ENCODE measurements at regions of chr21 and their contacts with region 1.

Region 1: GRCh38 chr21:17819114-17819876 is at the start of gene C21orf91:
- DNase-seq: peak; percentile 87
- H3K4me3 Mint-ChIP-seq: peak within 1 kb of the TSS; percentile 88
- H3K27ac Mint-ChIP-seq: peak within 1 kb of the TSS; percentile 100
- H3K4me1 Mint-ChIP-seq: peaks cover 43% of the 10 kb centered on the region
- H3K27me3 Mint-ChIP-seq: no peaks in the 10 kb centered on the region
- total RNA-seq, gene C21orf91: 45.4 and 49.2 TPM in 2 replicates

Region 2: DNA sequence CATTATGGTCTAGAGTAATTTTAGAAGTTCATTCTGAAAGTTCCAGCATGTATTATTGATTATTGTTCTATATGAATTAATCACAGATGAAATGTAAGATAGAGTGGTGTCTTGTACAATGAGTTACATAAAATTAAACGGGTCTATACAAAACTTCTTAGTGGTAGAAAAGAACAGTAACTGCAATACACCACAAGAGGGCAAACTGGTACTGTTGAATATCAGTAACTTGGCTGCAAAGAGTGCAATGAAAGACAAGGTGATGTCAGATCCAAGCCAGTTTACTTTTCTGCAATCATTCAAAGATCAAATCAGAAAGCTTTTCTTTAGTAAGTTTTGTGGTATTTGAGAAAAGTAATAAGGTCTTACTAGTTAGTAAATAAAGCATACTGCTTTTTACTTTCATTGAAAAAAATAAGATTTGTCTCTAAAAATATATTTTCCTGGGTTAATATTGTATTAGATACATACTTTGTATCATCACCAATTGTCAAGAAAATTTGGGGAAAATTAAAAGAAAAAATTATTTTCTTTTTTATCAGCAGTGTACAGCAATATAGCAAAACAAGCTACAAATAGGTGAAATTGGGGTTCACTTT is 140.2 kb before region 1 on chr21:
- intact Hi-C with region 1: loop called (anchors 1 kb)
- DNase-seq: peak; percentile 24
- H3K4me3 Mint-ChIP-seq: no peak overlapping the region
- H3K27ac Mint-ChIP-seq: no peak overlapping the region
- H3K4me1 Mint-ChIP-seq: no peaks in the 10 kb centered on the region
- H3K27me3 Mint-ChIP-seq: peaks cover 2% of the 10 kb centered on the region

Region 3: GRCh38 chr21:17780539-17780938 is 38.8 kb before region 1 on chr21:
- intact Hi-C with region 1: loop called (anchors 1 kb)
- DNase-seq: peak; percentile 39
- H3K4me3 Mint-ChIP-seq: peak overlapping the region; percentile 53
- H3K27ac Mint-ChIP-seq: peak overlapping the region; percentile 82
- H3K4me1 Mint-ChIP-seq: peaks cover 90% of the 10 kb centered on the region
- H3K27me3 Mint-ChIP-seq: no peaks in the 10 kb centered on the region

Region 4: GRCh38 chr21:17805966-17806365 is 13.3 kb before region 1 on chr21:
- intact Hi-C with region 1: loop called (anchors 1 kb)
- DNase-seq: no peak
- H3K4me3 Mint-ChIP-seq: no peak overlapping the region
- H3K27ac Mint-ChIP-seq: no peak overlapping the region
- H3K4me1 Mint-ChIP-seq: peaks cover 47% of the 10 kb centered on the region
- H3K27me3 Mint-ChIP-seq: no peaks in the 10 kb centered on the region

Measured in activated T-helper 1 cell treated with anti-CD3 and anti-CD28 coated beads, Interleukin-12 subunit alpha, Interleukin-12 subunit beta, Interleukin-2, Interleukin-4 antibody, amounts not matched to agents 30 ng/mL and 10 ng/mL and 1 ng/mL, durations not matched to agents 14 hours and 24 hours and 36 hours (primary cell).